AG04449 (cell line): ENCODE measurements at regions of chr7 and their contacts with region 1.

Region 1: GRCh38 chr7:28853834-28854749 is 104.0 kb downstream of the TRIL start:
- DNase-seq: no peak
- H3K4me3 ChIP-seq: peak overlapping the region; percentile 60
- CTCF ChIP-seq: peak; percentile 88

Region 2: GRCh38 chr7:28840592-28840995 is 13.5 kb before region 1 on chr7:
- CTCF ChIA-PET with region 1: interaction called, 28 read pairs
- POLR2A ChIA-PET with region 1: no interaction called
- DNase-seq: no peak
- H3K4me3 ChIP-seq: no peak overlapping the region
- CTCF ChIP-seq: peak; percentile 33

Region 3: GRCh38 chr7:28865601-28866144 is 11.6 kb after region 1 on chr7:
- CTCF ChIA-PET with region 1: interaction called, 11 read pairs
- POLR2A ChIA-PET with region 1: no interaction called
- DNase-seq: peak; percentile 45
- H3K4me3 ChIP-seq: no peak overlapping the region
- CTCF ChIP-seq: no peak

Region 4: GRCh38 chr7:28939844-28940544 is 85.9 kb after region 1 on chr7:
- CTCF ChIA-PET with region 1: no interaction called
- POLR2A ChIA-PET with region 1: no interaction called
- DNase-seq: no peak
- H3K4me3 ChIP-seq: no peak overlapping the region
- CTCF ChIP-seq: no peak